CD8-positive, alpha-beta T cell (primary cell): ENCODE measurements at regions of chr10 and their contacts with region 1.

Region 1: DNA sequence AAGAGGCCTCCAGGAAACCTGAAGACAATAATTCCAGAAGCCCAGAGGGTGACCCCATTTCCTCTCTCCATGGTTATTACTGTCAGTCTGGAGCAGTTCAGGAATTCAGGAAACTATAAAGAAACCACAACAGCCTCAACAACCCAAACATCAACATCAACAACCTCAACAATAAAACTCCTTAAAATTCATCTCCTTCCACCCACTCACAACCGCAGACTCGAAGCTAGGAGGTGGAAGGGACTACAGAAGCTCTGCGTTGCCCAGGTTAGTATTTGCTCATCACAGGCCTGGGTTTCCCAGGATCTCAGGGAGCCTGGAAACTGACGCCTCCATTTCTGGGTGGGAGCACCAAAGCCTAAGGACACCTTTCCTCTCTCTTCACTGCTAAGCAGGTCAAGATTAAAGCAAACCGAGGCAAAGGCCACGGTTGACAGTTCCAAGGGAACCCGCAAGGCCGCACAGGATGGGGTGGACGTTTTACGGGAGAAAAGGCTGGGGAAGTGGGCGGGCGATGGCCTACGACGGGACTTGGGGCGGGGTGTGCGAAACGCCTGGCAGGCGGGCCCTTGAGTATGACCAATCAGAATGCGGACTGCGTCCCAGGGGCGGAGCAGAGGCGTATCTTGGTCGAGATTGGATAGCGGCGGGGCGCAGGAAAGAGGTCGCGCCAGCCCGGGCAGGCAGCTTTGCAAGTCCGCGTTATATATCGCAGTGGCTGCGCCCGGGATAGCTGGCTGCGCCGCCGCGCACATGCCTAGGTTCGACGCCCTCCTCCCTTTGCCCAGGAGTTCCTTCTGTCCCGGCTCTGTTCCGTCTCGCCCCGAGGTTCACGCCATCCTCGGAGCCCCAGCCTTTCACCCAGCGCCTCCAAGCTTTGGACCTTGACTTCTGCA is at the start of gene ELOVL3:
- DNase-seq: peak; percentile 61 to 93 (median 82)
- ATAC-seq: peak; percentile 89
- H3K4me3 ChIP-seq: peak within 1 kb of the TSS; percentile 37 to 40
- H3K4me3 Mint-ChIP-seq: peak within 1 kb of the TSS; percentile 66
- H3K27ac ChIP-seq: no peak within 1 kb of the TSS
- H3K27ac Mint-ChIP-seq: peak within 1 kb of the TSS; percentile 60
- H3K4me1 ChIP-seq: peaks cover 19% of the 10 kb centered on the region
- H3K4me1 Mint-ChIP-seq: peaks cover 19% of the 10 kb centered on the region
- H3K27me3 ChIP-seq: peaks cover 11 to 14% of the 10 kb centered on the region in 2 experiments
- H3K27me3 Mint-ChIP-seq: peaks cover 47% of the 10 kb centered on the region
- CTCF ChIP-seq: no peak
- total RNA-seq, gene ELOVL3: not detected

Region 2: DNA sequence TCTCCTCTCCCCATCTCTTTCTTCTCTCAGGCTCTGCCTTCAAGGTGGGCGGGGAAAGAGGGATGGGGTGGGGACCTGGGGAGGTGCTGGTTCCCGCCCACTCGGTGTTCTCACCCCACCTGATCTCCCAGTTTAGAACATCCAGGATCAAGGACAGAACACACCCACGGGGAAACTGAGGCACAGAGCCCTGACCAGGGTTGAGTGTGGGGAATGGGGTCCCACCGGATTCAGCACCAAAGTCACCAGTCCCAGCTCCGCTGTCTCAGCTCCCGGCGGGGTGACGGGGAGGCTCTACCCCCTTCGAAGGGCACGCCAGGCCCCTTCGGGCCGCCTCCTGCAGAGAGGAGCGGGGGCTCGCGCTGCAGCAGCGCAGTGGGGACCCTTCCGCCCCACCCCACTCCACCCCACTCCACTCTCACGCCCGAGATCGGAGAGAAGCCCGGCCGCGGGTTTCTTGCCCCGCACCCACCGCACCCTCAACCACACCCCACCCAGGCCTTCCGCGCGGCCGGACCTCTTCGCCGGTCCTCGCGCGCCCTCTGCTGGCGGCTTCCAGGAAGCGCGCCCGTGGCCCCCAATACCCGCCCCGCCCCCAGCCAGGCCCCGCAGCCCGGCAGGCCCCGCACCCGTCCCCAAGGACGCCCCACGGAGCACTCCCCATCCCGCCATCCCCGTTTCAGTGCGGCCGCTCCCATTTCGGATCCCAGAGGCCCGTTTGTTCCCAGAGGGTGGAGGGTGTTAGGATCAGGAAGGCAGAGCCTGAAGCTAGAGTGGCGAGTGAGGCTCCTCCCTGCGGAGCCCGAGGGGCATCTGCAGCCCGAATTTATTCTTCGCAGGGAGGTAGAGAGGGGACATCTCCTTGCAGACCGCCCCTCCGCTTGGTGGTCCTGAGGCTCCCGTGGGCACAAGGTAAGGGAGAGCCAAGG is 655.8 kb before region 1 on chr10:
- CTCF ChIA-PET with region 1: no interaction called
- POLR2A ChIA-PET with region 1: no interaction called
- intact Hi-C with region 1: no loop called
- DNase-seq: peak; percentile 67 to 90 (median 79)
- ATAC-seq: peak; percentile 92
- H3K4me3 ChIP-seq: peak overlapping the region; percentile 69
- H3K4me3 Mint-ChIP-seq: peak overlapping the region; percentile 72
- H3K27ac ChIP-seq: no peak overlapping the region
- H3K27ac Mint-ChIP-seq: no peak overlapping the region
- H3K4me1 ChIP-seq: peaks cover 16% of the 10 kb centered on the region
- H3K4me1 Mint-ChIP-seq: peaks cover 20% of the 10 kb centered on the region
- H3K27me3 ChIP-seq: peaks cover 27 to 30% of the 10 kb centered on the region in 2 experiments
- H3K27me3 Mint-ChIP-seq: peaks cover 38% of the 10 kb centered on the region
- CTCF ChIP-seq: peak; percentile 89

Region 3: DNA sequence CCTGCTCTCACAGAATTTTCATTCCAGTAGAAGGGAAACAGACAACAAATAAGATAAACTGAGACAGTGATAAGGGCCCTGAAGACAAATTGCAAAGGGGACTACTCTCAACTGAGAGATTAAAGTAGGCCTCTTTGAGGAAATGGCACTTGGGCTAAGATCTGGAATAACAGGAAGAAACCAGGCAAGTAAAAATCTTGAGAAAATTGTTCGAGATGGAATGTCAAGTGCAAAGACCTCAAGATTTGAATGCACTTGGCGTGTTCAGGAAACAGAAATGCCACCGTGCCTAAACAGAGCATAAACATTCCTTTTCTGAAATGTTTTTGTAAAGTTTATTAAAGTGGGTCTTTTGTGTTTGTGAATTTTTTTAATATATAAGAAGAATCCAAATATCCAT is 180.6 kb before region 1 on chr10:
- CTCF ChIA-PET with region 1: no interaction called
- POLR2A ChIA-PET with region 1: no interaction called
- intact Hi-C with region 1: no loop called
- DNase-seq: no peak
- ATAC-seq: no peak
- H3K4me3 ChIP-seq: no peak overlapping the region
- H3K4me3 Mint-ChIP-seq: no peak overlapping the region
- H3K27ac ChIP-seq: no peak overlapping the region
- H3K27ac Mint-ChIP-seq: no peak overlapping the region
- H3K4me1 ChIP-seq: peaks cover 3% of the 10 kb centered on the region
- H3K4me1 Mint-ChIP-seq: peaks cover 46% of the 10 kb centered on the region
- H3K27me3 ChIP-seq: no peaks in the 10 kb centered on the region
- H3K27me3 Mint-ChIP-seq: no peaks in the 10 kb centered on the region
- CTCF ChIP-seq: no peak

Region 4: GRCh38 chr10:102167861-102168260 is 58.0 kb before region 1 on chr10:
- CTCF ChIA-PET with region 1: interaction called, 22 read pairs
- POLR2A ChIA-PET with region 1: no interaction called
- intact Hi-C with region 1: no loop called
- DNase-seq: no peak
- ATAC-seq: no peak
- H3K4me3 ChIP-seq: no peak overlapping the region
- H3K4me3 Mint-ChIP-seq: no peak overlapping the region
- H3K27ac ChIP-seq: no peak overlapping the region
- H3K27ac Mint-ChIP-seq: no peak overlapping the region
- H3K4me1 ChIP-seq: peaks cover 4% of the 10 kb centered on the region
- H3K4me1 Mint-ChIP-seq: peaks cover 6% of the 10 kb centered on the region
- H3K27me3 ChIP-seq: peaks cover 0 to 3% of the 10 kb centered on the region in 2 experiments
- H3K27me3 Mint-ChIP-seq: no peaks in the 10 kb centered on the region
- CTCF ChIP-seq: no peak

Region 5: DNA sequence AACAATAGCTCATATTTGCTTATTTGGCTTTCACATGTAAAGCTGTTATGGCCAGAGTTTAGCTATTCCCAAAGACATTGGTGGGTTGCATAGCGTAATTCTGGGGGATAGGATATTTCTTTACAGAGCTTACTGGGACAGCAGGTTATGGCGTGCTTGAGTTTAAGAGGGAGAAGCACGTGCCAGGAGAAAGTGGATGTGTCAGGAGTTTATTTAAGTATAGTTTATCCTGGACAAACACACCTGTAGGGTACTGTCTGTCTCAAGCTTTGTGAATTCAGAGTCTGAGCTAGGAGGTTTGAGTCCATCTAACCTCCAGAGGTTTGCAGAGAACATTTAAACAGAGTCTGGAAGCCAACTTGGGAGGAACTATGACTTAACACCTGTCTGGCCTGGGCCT is 40.8 kb after region 1 on chr10:
- CTCF ChIA-PET with region 1: interaction called, 10 read pairs
- POLR2A ChIA-PET with region 1: no interaction called
- intact Hi-C with region 1: no loop called
- DNase-seq: no peak
- ATAC-seq: no peak
- H3K4me3 ChIP-seq: no peak overlapping the region
- H3K4me3 Mint-ChIP-seq: no peak overlapping the region
- H3K27ac ChIP-seq: no peak overlapping the region
- H3K27ac Mint-ChIP-seq: no peak overlapping the region
- H3K4me1 ChIP-seq: peaks cover under 1% of the 10 kb centered on the region
- H3K4me1 Mint-ChIP-seq: peaks cover 56% of the 10 kb centered on the region
- H3K27me3 ChIP-seq: no peaks in the 10 kb centered on the region
- H3K27me3 Mint-ChIP-seq: no peaks in the 10 kb centered on the region
- CTCF ChIP-seq: no peak

Region 6: GRCh38 chr10:102358712-102359382 is 133.0 kb after region 1 on chr10:
- CTCF ChIA-PET with region 1: interaction called, 375 read pairs
- POLR2A ChIA-PET with region 1: interaction called, 3 read pairs
- intact Hi-C with region 1: no loop called
- DNase-seq: no peak
- ATAC-seq: no peak
- H3K4me3 ChIP-seq: no peak overlapping the region
- H3K4me3 Mint-ChIP-seq: no peak overlapping the region
- H3K27ac ChIP-seq: no peak overlapping the region
- H3K27ac Mint-ChIP-seq: no peak overlapping the region
- H3K4me1 ChIP-seq: no peaks in the 10 kb centered on the region
- H3K4me1 Mint-ChIP-seq: no peaks in the 10 kb centered on the region
- H3K27me3 ChIP-seq: no peaks in the 10 kb centered on the region
- H3K27me3 Mint-ChIP-seq: no peaks in the 10 kb centered on the region
- CTCF ChIP-seq: no peak

Region 7: GRCh38 chr10:102394079-102394800 is 168.3 kb after region 1 on chr10:
- CTCF ChIA-PET with region 1: interaction called, 39 read pairs
- POLR2A ChIA-PET with region 1: interaction called, 5 read pairs
- intact Hi-C with region 1: loop called in 1 of 2 experiments (anchors 1 kb)
- DNase-seq: peak; percentile 95 to 99 (median 98)
- ATAC-seq: peak; percentile 74
- H3K4me3 ChIP-seq: peak overlapping the region; percentile 89 to 95
- H3K4me3 Mint-ChIP-seq: peak overlapping the region; percentile 90
- H3K27ac ChIP-seq: peak overlapping the region; percentile 99 to 100
- H3K27ac Mint-ChIP-seq: peak overlapping the region; percentile 98
- H3K4me1 ChIP-seq: peaks cover 24% of the 10 kb centered on the region
- H3K4me1 Mint-ChIP-seq: peaks cover 37% of the 10 kb centered on the region
- H3K27me3 ChIP-seq: no peaks in the 10 kb centered on the region
- H3K27me3 Mint-ChIP-seq: no peaks in the 10 kb centered on the region
- CTCF ChIP-seq: no peak

Region 8: DNA sequence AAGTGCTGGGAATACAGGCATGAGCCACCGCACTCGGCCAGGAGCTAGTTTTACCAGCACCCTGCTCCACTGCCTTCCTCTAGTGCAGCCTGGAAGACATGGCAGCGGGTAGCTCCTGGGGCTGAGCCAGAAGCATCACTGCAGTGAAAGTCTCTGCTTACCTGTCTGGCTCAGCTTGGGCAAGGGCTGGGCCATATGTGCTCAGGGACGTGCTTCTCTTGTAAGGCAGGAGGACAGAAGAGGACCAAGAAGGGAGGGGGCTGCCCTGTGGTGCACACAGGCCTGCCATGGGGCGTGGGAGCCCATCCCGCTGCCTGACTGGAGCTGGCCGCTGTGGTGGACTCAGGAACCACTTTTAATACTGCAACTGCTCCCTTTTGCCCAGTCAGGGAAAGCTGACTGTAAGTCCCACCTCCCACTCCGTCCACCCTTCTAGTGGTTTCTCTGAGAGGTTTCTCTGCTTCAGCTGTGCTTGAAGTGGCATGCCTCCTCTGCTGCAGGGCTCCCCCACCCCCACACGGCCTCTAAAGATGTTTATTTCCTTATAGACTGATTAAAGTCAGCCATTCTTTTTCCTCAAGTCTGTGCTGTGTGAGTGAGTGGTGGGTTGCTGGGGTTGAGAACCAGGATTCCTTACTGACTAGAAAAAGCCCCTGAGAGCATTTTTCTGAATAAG is 250.7 kb after region 1 on chr10:
- CTCF ChIA-PET with region 1: interaction called, 29 read pairs
- POLR2A ChIA-PET with region 1: no interaction called
- intact Hi-C with region 1: loop called (anchors 1 kb)
- DNase-seq: peak in 5 of 9 experiments; percentile 13 to 60 (median 24)
- ATAC-seq: no peak
- H3K4me3 ChIP-seq: no peak overlapping the region
- H3K4me3 Mint-ChIP-seq: peak overlapping the region; percentile 29
- H3K27ac ChIP-seq: peak overlapping the region in 1 of 2 experiments; percentile 43
- H3K27ac Mint-ChIP-seq: peak overlapping the region; percentile 79
- H3K4me1 ChIP-seq: peaks cover 36% of the 10 kb centered on the region
- H3K4me1 Mint-ChIP-seq: peaks cover 43% of the 10 kb centered on the region
- H3K27me3 ChIP-seq: no peaks in the 10 kb centered on the region
- H3K27me3 Mint-ChIP-seq: no peaks in the 10 kb centered on the region
- CTCF ChIP-seq: no peak